ENCODE measurements at regions of chr17 and their contacts with region 1.

Region 1: DNA sequence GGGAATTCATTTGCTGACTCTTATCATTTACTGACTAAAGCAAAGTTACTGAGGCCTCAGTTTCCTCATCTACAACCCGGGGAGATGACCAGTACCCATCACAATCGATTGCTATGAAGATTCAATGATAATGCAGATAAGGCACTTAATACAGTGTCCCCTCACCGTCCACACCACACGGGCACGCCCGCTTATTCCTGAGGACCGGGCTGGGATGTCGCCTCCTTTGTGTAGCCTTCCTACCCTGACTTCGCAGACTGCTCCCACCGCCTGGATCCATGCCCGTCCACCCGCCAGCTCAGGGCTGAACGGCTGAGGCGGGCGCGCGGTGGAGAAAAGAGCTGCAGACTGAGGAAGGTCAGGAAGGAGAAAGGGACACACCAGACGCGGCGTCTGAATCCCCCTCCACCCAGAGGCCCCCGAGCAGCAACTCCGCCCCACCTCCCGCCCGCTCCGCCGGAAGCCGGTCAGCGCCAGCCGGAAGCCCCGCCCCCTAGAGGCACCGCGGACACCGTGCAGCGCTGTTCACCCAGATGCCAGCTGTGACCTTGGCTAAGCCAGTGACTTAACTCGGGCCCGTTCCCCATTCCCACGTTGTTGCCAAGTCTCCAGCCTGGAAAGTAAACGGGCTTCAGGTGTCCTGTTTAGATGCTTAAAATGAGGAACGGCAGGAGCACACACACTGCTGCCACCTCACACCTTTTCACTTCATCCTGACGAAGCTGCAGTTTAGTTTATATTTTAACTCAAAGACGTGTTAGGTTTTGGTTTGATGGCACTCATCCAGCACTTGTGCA is at the start of gene KRABD2:
- DNase-seq: peak; percentile 82 to 95
- H3K4me3 ChIP-seq: peak within 1 kb of the TSS; percentile 48 to 84 (median 72)
- H3K27ac ChIP-seq: peak within 1 kb of the TSS; percentile 86
- H3K4me1 ChIP-seq: peaks cover 0 to 15% (median 2%) of the 10 kb centered on the region in 4 experiments; a peak in 4 of 7 replicates
- H3K27me3 ChIP-seq: no peaks in the 10 kb centered on the region
- CTCF ChIP-seq: peak; percentile 68 to 73 (median 72)
- EP300 ChIP-seq: peak in 1 of 2 experiments; percentile 66; a peak in 1 of 3 replicates
- POLR2A ChIP-seq: peak; percentile 93 to 94
- RAD21 ChIP-seq: peak; percentile 13 to 32; a peak in 3 of 4 replicates

Region 2: GRCh38 chr17:8294814-8295316 is 81.6 kb before region 1 on chr17:
- CTCF ChIA-PET with region 1: no interaction called
- POLR2A ChIA-PET with region 1: interaction called, 11 read pairs
- DNase-seq: no peak
- H3K4me3 ChIP-seq: peak overlapping the region; percentile 64 to 82 (median 76); a peak in 7 of 8 replicates
- H3K27ac ChIP-seq: no peak overlapping the region
- H3K4me1 ChIP-seq: peaks cover 0 to 8% (median 5%) of the 10 kb centered on the region in 4 experiments; a peak in 5 of 7 replicates
- H3K27me3 ChIP-seq: peaks cover 0 to 2% (median 0%) of the 10 kb centered on the region in 4 experiments; a peak in 1 of 7 replicates
- CTCF ChIP-seq: no peak
- EP300 ChIP-seq: no peak
- POLR2A ChIP-seq: no peak
- RAD21 ChIP-seq: no peak

Region 3: GRCh38 chr17:8326511-8327302 is 49.8 kb before region 1 on chr17:
- CTCF ChIA-PET with region 1: interaction called, 3 read pairs
- POLR2A ChIA-PET with region 1: interaction called, 33 read pairs
- DNase-seq: peak in 1 of 2 experiments; percentile 74
- H3K4me3 ChIP-seq: peak overlapping the region; percentile 56 to 73 (median 62)
- H3K27ac ChIP-seq: no peak overlapping the region
- H3K4me1 ChIP-seq: peaks cover 0 to 11% (median 5%) of the 10 kb centered on the region in 4 experiments; a peak in 5 of 7 replicates
- H3K27me3 ChIP-seq: peaks cover 2 to 20% (median 17%) of the 10 kb centered on the region in 4 experiments; a peak in 6 of 7 replicates
- CTCF ChIP-seq: no peak
- EP300 ChIP-seq: no peak
- POLR2A ChIP-seq: 0 out of 3 replicates have a peak, but pooled peaks of 1 of the 2 experiments have one; percentile 33
- RAD21 ChIP-seq: no peak

Region 4: DNA sequence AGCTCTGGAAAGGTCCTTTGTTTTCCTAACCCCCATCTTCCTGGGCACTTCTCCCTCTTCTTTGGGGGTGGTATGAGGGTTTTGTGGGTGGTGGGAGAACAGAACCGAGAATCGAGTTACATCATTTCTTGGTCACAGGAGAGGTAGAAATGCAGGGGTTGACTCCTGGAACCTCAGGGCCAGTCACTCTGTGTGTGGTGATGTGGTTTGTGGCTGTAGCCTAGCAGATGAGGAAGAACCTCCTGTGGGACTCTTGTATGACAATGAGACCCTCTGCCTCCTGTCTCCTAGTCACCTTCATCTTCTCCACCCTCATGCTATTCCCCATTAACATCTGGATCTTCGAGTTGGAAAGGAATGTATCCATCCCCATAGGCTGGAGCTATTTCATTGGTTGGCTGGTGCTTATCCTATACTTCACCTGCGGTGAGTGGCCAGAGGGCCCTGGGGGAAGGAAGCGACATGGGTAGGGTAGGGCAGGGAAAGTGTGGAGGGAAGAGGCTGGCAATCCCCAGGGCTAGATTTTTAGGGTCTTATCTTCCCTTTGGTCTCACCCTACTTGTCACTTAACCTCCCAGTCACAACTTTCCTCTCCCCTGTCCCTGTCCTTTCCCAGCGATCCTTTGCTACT is 31.3 kb before region 1 on chr17:
- CTCF ChIA-PET with region 1: interaction called, 5 read pairs
- POLR2A ChIA-PET with region 1: interaction called, 66 read pairs
- DNase-seq: no peak
- H3K4me3 ChIP-seq: no peak overlapping the region
- H3K27ac ChIP-seq: no peak overlapping the region
- H3K4me1 ChIP-seq: peaks cover 0 to 4% (median 3%) of the 10 kb centered on the region in 4 experiments; a peak in 4 of 7 replicates
- H3K27me3 ChIP-seq: no peaks in the 10 kb centered on the region
- CTCF ChIP-seq: no peak
- EP300 ChIP-seq: no peak
- POLR2A ChIP-seq: no peak
- RAD21 ChIP-seq: no peak

Region 5: GRCh38 chr17:8359769-8360168 is 16.7 kb before region 1 on chr17:
- CTCF ChIA-PET with region 1: interaction called, 8 read pairs
- POLR2A ChIA-PET with region 1: interaction called, 36 read pairs
- DNase-seq: no peak
- H3K4me3 ChIP-seq: no peak overlapping the region
- H3K27ac ChIP-seq: no peak overlapping the region
- H3K4me1 ChIP-seq: peaks cover 0 to 5% (median 1%) of the 10 kb centered on the region in 4 experiments; a peak in 1 of 7 replicates
- H3K27me3 ChIP-seq: no peaks in the 10 kb centered on the region
- CTCF ChIP-seq: no peak
- EP300 ChIP-seq: no peak
- POLR2A ChIP-seq: no peak
- RAD21 ChIP-seq: no peak

Region 6: DNA sequence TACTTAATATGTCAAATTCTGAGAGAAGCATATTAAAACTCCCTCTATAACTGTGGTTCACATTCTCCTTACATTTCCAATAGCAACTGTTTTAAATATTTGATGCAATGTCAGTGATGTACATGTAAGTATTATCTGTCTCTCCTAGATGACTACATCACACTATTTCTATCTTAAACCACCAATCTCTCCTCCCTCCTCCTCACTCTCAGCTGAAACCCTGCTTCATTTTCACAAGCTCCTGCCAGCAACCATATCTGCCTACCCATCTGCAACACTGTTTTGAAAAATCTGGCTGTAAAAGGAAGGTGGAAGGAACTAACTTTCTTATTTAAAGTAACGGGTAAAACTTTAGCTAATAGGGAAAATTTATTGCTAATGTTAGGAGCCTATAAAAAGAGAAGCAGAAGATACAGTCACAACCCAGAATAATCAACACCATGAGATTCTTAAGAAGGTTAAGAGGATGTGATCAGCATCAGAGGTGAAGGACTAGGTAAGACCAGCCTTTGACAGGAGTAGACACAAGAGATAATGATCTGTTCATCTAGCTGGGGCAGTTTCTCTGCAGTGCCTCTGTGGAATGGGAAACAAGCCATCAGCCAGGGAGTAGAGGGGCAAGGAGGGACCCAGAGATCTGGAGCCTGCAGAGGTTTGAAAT is 223.0 kb after region 1 on chr17:
- CTCF ChIA-PET with region 1: no interaction called
- POLR2A ChIA-PET with region 1: no interaction called
- DNase-seq: no peak
- H3K4me3 ChIP-seq: no peak overlapping the region
- H3K27ac ChIP-seq: no peak overlapping the region
- H3K4me1 ChIP-seq: no peaks in the 10 kb centered on the region; a peak in 1 of 7 replicates
- H3K27me3 ChIP-seq: no peaks in the 10 kb centered on the region
- CTCF ChIP-seq: no peak
- EP300 ChIP-seq: no peak
- POLR2A ChIP-seq: no peak
- RAD21 ChIP-seq: no peak